ENCODE measurements at regions of chr20 and their contacts with region 1.

Region 1: GRCh38 chr20:41339507-41340326 is 904 bp upstream of the LPIN3 start:
- DNase-seq: peak; percentile 77
- ATAC-seq: peak; percentile 79 to 88
- H3K4me3 ChIP-seq: peak overlapping the region; percentile 66
- H3K27ac ChIP-seq: peak overlapping the region; percentile 45 to 94; a peak in 5 of 6 replicates
- H3K4me1 ChIP-seq: peaks cover 11% of the 10 kb centered on the region; the same call in 2 of the 3 replicates
- CTCF ChIP-seq: peak; percentile 95
- EP300 ChIP-seq: no peak
- POLR2A ChIP-seq: no peak
- RAD21 ChIP-seq: peak; percentile 97 to 99

Region 2: DNA sequence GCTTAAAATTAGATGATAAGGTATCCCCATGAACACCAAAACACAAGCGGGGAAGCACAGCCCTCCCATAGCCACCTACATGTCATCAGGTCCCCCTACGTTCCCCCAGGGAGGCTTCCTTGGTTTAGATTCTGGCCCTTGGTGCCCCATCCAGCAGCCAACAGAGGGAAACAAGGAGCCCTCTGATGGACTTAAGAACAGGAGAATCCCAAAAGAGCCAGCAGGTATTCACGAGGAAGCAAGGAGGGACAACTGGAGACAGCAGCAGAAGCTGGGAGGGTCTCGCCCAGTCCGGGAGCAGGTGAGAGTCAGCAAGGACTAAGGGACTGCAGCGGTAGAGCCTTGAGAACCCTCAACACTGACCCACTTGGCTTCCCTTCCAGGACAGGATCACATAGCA is 369.5 kb before region 1 on chr20:
- CTCF ChIA-PET with region 1: interaction called, 16 read pairs
- POLR2A ChIA-PET with region 1: no interaction called
- DNase-seq: no peak
- ATAC-seq: peak; percentile 16 to 38; a peak in 2 of 6 replicates
- H3K4me3 ChIP-seq: no peak overlapping the region
- H3K27ac ChIP-seq: no peak overlapping the region
- H3K4me1 ChIP-seq: no peaks in the 10 kb centered on the region
- CTCF ChIP-seq: no peak
- EP300 ChIP-seq: no peak
- POLR2A ChIP-seq: no peak
- RAD21 ChIP-seq: peak in 1 of 2 experiments; percentile 6; a peak in 1 of 5 replicates

Region 3: DNA sequence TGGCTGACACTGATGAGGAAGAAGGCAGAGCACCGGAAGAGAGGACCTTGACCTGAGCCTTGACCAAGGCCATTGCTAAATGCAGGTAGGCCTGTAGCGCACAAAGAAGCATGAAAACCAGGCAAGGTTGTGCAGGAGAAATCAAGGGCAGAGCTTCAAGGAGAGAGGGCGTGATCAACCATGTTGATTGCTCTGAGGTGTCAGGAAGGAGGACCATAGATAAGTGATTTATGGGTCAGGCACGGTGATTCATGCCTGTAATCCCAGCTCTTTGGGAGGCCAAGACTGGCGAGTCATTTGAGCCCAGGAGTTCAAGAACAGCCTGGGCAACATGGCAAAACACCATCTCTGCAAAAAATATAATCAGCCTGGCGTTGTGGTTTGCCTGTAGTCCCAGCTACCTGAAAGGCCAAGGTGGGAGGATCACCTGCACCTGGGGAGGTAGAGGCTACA is 190.0 kb before region 1 on chr20:
- CTCF ChIA-PET with region 1: interaction called, 26 read pairs
- POLR2A ChIA-PET with region 1: no interaction called
- DNase-seq: peak in 1 of 2 experiments; percentile 32
- ATAC-seq: peak in 1 of 2 experiments; percentile 63; a peak in 3 of 6 replicates
- H3K4me3 ChIP-seq: no peak overlapping the region
- H3K27ac ChIP-seq: no peak overlapping the region
- H3K4me1 ChIP-seq: 0 out of 3 replicates have a peak, but pooled peaks cover 8% of the 10 kb centered on the region
- CTCF ChIP-seq: no peak
- EP300 ChIP-seq: no peak
- POLR2A ChIP-seq: no peak
- RAD21 ChIP-seq: no peak

Region 4: DNA sequence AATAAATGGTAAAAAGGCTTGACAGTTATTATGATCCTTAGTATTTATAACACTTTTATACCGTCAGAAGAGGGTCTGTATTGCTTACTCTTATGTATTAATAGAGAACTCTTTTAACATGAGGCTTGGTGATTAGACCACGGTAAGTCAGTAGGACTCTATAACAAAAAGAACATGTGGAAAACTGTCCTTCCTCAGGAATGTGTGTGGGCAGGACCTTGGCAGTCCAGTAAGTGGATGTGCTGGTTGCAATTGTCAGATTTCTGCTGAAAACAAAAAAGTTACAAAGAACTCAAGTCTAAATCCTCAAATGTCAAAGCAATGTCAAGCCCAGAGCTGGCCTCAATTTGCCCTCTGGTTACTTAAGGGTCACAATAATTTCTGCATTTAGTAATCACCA is 121.3 kb before region 1 on chr20:
- CTCF ChIA-PET with region 1: interaction called, 13 read pairs
- POLR2A ChIA-PET with region 1: no interaction called
- DNase-seq: no peak
- ATAC-seq: no peak
- H3K4me3 ChIP-seq: no peak overlapping the region
- H3K27ac ChIP-seq: no peak overlapping the region
- H3K4me1 ChIP-seq: no peaks in the 10 kb centered on the region
- CTCF ChIP-seq: no peak
- EP300 ChIP-seq: no peak
- POLR2A ChIP-seq: no peak
- RAD21 ChIP-seq: no peak

Region 5: DNA sequence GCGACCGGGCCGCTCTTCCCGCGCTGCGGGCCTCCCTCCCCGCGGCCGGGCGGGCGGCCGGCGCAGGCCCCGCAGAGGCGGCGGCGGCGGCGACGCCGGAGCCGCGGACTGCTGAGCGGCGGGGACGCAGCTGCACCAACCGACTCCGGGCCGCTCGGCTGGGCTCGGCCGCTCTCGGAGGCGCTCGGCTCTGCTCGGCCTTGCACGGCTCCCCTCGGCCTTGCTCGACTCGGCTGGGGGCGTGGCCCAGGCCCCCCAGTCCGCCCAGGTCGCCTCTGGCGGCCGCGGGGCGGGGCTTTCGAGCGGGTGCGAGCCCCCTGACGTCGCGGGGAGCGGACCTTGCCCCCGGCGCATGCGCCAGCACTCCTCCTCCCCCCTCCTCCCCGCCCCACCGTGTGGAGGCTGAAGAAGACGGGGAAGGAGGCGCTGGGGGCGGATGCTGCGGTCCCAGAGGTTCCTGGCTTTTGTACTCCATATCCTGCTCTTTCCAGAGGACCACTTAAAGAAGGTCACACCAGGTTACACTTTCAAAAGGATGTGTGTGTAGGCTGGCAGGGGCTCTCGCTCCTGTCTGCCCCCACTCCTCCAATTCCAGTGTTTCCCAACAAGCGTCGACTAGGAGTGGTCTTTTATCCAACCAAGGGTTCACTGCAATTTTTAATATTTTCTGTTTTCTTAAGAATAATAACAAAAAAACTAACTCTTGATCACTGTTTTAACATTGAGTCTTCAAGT is 22.0 kb before region 1 on chr20 and contains the start of gene ZHX3:
- CTCF ChIA-PET with region 1: interaction called, 31 read pairs
- POLR2A ChIA-PET with region 1: no interaction called
- DNase-seq: peak; percentile 90 to 94
- ATAC-seq: peak; percentile 94 to 99
- H3K4me3 ChIP-seq: peak within 1 kb of the TSS; percentile 73
- H3K27ac ChIP-seq: peak within 1 kb of the TSS; percentile 74 to 87
- H3K4me1 ChIP-seq: peaks cover 20% of the 10 kb centered on the region; the same call in 2 of the 3 replicates
- CTCF ChIP-seq: no peak
- EP300 ChIP-seq: no peak
- POLR2A ChIP-seq: peak; percentile 84
- RAD21 ChIP-seq: no peak
- polyA plus RNA-seq, gene ZHX3: 3.6 and 5.5 TPM in 2 replicates

Region 6: DNA sequence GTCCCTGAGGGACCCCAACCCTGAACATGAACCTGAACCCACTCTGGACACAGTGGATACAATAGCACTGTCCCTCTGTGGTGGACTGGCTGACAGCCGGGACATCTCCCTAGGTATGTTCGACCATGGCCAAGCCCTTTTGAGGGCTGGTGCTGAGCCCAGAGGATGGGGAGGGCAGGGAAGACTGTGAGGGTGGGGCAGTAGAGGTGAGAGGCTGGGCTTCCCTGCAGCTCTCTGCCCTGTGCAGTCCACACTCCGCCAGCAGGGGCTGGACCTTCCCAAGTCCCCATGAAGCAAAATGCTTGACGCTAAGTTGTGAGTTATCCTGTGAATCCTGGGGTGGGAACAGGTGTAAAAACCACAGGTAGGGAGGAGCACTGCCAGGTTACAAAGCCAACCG is 12.4 kb after region 1 on chr20:
- CTCF ChIA-PET with region 1: interaction called, 28 read pairs
- POLR2A ChIA-PET with region 1: no interaction called
- DNase-seq: peak; percentile 22 to 36
- ATAC-seq: peak; percentile 65 to 81; a peak in 5 of 6 replicates
- H3K4me3 ChIP-seq: no peak overlapping the region
- H3K27ac ChIP-seq: no peak overlapping the region
- H3K4me1 ChIP-seq: no peaks in the 10 kb centered on the region
- CTCF ChIP-seq: no peak
- EP300 ChIP-seq: no peak
- POLR2A ChIP-seq: no peak
- RAD21 ChIP-seq: no peak